Heart left ventricle (tissue), 16 donors: ENCODE measurements at regions of chr12 and their contacts with region 1.

Region 1: GRCh38 chr12:107607464-107608392 is 77.9 kb upstream of the PWP1 start:
- DNase-seq: peak; percentile 74 to 87 (median 82)
- ATAC-seq: peak; percentile 57 to 87 (median 76)
- H3K4me3 ChIP-seq: no peak overlapping the region
- H3K27ac ChIP-seq: no peak overlapping the region
- H3K4me1 ChIP-seq: peaks cover 0 to 6% (median 0%) of the 10 kb centered on the region in 12 donors
- H3K27me3 ChIP-seq: peaks cover 0 to 5% (median 0%) of the 10 kb centered on the region in 9 donors
- CTCF ChIP-seq: peak; percentile 78 to 94 (median 88)
- POLR2A ChIP-seq: no peak

Region 2: GRCh38 chr12:107131832-107132616 is 475.7 kb before region 1 on chr12:
- intact Hi-C with region 1: loop called (anchors 1 to 2 kb)
- DNase-seq: peak in 1 of 5 donors; percentile 18
- ATAC-seq: peak in 3 of 4 donors; percentile 44 to 65 (median 54)
- H3K4me3 ChIP-seq: no peak overlapping the region
- H3K27ac ChIP-seq: no peak overlapping the region
- H3K4me1 ChIP-seq: peaks cover 0 to 6% (median 0%) of the 10 kb centered on the region in 12 donors
- H3K27me3 ChIP-seq: peaks cover 0 to 8% (median 0%) of the 10 kb centered on the region in 9 donors
- CTCF ChIP-seq: peak; percentile 53 to 88 (median 75)
- POLR2A ChIP-seq: no peak

Region 3: GRCh38 chr12:107317751-107318613 is 289.7 kb before region 1 on chr12:
- intact Hi-C with region 1: loop called in 2 of 10 experiments (anchors 10 kb)
- DNase-seq: peak; percentile 77 to 90 (median 86)
- ATAC-seq: peak; percentile 91 to 97 (median 94)
- H3K4me3 ChIP-seq: peak overlapping the region; percentile 29 to 67 (median 50)
- H3K27ac ChIP-seq: peak overlapping the region in 2 of 12 donors; percentile 28 to 32
- H3K4me1 ChIP-seq: peaks cover 0 to 47% (median 14%) of the 10 kb centered on the region in 12 donors
- H3K27me3 ChIP-seq: peaks cover 7 to 70% (median 24%) of the 10 kb centered on the region in 9 donors
- CTCF ChIP-seq: peak in 2 of 12 donors; percentile 8 to 19
- POLR2A ChIP-seq: no peak

Region 4: GRCh38 chr12:107402041-107403022 is 205.4 kb before region 1 on chr12:
- intact Hi-C with region 1: loop called in 1 of 10 experiments (anchors 5 kb)
- DNase-seq: peak in 2 of 5 donors; percentile 22 to 28
- ATAC-seq: peak in 1 of 4 donors; percentile 54
- H3K4me3 ChIP-seq: no peak overlapping the region
- H3K27ac ChIP-seq: no peak overlapping the region
- H3K4me1 ChIP-seq: peaks cover 0 to 3% (median 0%) of the 10 kb centered on the region in 12 donors
- H3K27me3 ChIP-seq: no peaks in the 10 kb centered on the region
- CTCF ChIP-seq: peak in 11 of 12 donors; percentile 12 to 55 (median 37)
- POLR2A ChIP-seq: no peak

Region 5: GRCh38 chr12:107501681-107502080 is 106.0 kb before region 1 on chr12:
- intact Hi-C with region 1: no loop called
- DNase-seq: no peak
- ATAC-seq: no peak
- H3K4me3 ChIP-seq: no peak overlapping the region
- H3K27ac ChIP-seq: no peak overlapping the region
- H3K4me1 ChIP-seq: no peaks in the 10 kb centered on the region
- H3K27me3 ChIP-seq: no peaks in the 10 kb centered on the region
- CTCF ChIP-seq: no peak
- POLR2A ChIP-seq: no peak

Region 6: GRCh38 chr12:107873223-107873622 is 265.5 kb after region 1 on chr12:
- intact Hi-C with region 1: no loop called
- DNase-seq: no peak
- ATAC-seq: no peak
- H3K4me3 ChIP-seq: no peak overlapping the region
- H3K27ac ChIP-seq: no peak overlapping the region
- H3K4me1 ChIP-seq: no peaks in the 10 kb centered on the region
- H3K27me3 ChIP-seq: peaks cover 0 to 48% (median 14%) of the 10 kb centered on the region in 9 donors
- CTCF ChIP-seq: no peak
- POLR2A ChIP-seq: no peak